KBM-7 (cell line): ENCODE measurements at regions of chr20 and their contacts with region 1.

Region 1: DNA sequence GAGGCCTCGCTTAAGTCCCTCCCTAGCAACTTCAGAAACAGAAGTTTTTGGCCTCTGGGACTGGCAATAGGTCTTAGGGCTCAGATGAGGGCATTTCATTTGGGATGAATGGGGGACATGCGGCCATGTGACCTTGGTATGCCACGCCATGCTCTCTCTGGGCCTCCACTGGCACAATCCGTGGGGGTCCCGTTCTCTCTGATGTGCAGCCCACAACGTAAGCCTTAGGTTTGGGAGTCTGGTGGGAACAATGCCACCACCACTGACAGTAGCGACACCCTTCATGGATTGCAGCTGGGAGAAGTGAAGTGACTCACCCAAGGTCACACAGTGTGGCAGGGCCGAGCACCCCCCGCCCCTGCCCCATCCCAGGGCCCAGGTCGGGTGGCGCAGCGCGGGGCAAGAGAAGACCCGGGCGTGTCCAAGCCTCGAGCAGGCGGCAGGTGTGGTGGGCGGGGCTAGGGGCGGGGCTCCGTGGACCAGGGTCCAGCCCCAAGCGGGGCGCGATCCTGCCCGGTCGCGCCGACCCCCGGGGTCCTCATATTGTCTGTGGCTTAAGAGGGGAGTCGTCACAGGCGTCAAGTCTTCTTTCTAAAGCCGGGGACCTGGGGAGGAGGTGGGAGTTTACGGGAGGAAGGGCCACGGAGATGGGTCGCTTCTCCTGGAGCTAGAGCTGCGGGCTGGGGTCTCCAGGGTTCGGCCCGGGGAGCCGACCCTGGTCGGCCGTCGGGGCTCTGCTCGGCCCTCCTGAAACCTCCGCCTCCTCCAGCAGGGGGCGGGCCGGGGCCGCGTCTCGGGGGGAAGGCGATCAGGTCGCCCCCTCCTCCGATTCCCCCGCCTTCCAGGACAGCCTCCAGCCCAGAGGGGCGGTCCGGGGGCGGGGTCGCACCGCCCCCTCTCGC is 698 bp upstream of the CEBPB start:
- DNase-seq: peak; percentile 76

Region 2: GRCh38 chr20:50460460-50461267 is 270.7 kb after region 1 on chr20:
- in situ Hi-C with region 1: loop called (anchors 10 kb)
- DNase-seq: peak; percentile 92

Region 3: DNA sequence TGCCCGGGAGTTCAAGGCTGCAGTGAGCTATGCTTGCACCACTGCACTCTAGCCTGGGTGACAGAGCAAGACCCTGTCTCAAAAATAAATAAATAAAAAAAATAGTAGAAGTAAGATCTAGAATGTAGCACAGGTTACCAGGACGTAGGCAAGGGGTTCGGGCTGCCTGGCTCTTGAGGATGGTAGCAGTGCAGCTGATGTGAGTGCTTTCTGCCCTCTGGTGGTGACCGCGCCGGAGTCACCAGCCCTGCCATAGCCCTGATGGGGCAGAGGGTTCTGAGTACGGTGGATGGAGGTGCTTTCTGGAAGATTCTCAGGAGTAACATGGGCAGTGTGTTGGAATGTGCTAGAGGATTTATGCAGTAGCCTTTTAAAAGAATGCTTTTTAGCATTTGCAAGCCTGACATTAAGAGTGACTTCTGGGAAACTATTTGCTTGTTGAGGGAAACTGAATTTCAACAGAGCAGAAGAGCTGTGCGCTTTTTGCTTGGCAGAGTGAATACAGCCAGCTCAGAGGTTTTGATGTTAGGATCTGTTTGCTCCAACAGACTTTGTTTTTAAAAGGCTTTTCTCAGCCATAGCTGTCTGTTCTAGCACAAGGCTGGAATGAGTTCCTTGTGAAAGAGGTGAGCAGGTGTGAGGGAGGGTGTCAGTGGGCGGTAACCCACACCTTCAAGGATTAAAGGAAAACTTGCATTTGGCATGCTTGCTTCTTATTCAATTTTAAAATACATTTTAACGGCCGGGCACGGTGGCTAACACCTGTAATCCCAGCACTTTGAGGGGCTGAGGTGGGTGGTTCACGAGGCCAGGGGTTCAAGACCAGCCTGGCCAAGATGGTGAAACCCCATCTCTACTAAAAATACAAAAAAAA is 386.2 kb after region 1 on chr20:
- in situ Hi-C with region 1: loop called (anchors 10 kb)
- DNase-seq: peak; percentile 74